B cell (primary cell): ENCODE measurements at regions of chr1 and their contacts with region 1.

Region 1: DNA sequence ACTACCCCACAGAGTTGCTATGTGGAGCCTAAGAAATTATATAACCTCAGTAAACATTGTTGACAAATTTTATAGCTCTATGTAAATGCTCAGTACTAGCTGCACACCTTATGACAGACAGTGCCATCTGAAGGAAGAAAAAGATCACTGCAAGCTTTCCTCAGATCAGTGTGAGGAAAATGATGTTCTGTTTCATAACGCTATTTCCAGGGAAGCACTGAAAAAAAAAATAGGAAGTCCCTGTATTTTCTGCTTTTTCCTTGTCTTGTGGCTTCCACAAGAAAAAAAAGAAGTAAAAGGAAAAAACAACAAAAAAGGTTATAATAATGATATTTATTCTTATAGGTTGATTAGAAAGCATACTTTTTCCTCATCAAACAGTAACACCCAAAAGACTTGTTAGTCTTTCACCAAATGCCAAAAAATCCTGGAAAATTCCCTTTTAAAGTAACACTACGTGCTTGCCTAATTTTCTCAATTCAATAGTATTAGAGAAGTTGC is 23.2 kb downstream of the LYST start:
- DNase-seq: peak; percentile 50
- ATAC-seq: peak; percentile 58
- H3K4me3 ChIP-seq: no peak overlapping the region
- H3K4me3 Mint-ChIP-seq: peak overlapping the region; percentile 42
- H3K27ac ChIP-seq: peak overlapping the region; percentile 71 to 84
- H3K27ac Mint-ChIP-seq: peak overlapping the region; percentile 73
- H3K4me1 ChIP-seq: peaks cover 65 to 67% of the 10 kb centered on the region in 2 donors
- H3K4me1 Mint-ChIP-seq: peaks cover 90% of the 10 kb centered on the region
- H3K27me3 ChIP-seq: no peaks in the 10 kb centered on the region
- H3K27me3 Mint-ChIP-seq: no peaks in the 10 kb centered on the region
- CTCF ChIP-seq: peak; percentile 74

Region 2: DNA sequence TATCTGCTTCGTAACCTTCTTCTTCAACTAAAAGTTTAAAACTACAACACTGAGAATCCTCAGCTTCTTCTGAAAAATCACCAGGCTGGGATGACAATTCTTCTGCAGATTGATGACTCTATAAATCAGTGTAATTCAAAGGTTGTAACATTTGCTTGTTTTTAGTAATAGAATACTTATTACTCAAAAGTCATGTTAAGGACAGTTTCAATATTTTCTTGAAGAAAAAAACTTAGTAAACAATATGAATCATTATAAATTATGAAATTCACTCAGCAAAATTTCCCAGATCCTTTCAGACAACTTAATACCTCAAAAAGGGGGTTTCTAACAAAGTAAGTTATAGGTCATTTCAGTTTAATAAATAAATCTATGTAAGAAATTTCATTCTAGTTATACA is 40.6 kb before region 1 on chr1:
- CTCF ChIA-PET with region 1: interaction called, 5 read pairs
- POLR2A ChIA-PET with region 1: no interaction called
- intact Hi-C with region 1: loop called (anchors 5 kb)
- DNase-seq: no peak
- ATAC-seq: no peak
- H3K4me3 ChIP-seq: no peak overlapping the region
- H3K4me3 Mint-ChIP-seq: no peak overlapping the region
- H3K27ac ChIP-seq: no peak overlapping the region
- H3K27ac Mint-ChIP-seq: no peak overlapping the region
- H3K4me1 ChIP-seq: no peaks in the 10 kb centered on the region
- H3K4me1 Mint-ChIP-seq: no peaks in the 10 kb centered on the region
- H3K27me3 ChIP-seq: no peaks in the 10 kb centered on the region
- H3K27me3 Mint-ChIP-seq: no peaks in the 10 kb centered on the region
- CTCF ChIP-seq: no peak

Region 3: DNA sequence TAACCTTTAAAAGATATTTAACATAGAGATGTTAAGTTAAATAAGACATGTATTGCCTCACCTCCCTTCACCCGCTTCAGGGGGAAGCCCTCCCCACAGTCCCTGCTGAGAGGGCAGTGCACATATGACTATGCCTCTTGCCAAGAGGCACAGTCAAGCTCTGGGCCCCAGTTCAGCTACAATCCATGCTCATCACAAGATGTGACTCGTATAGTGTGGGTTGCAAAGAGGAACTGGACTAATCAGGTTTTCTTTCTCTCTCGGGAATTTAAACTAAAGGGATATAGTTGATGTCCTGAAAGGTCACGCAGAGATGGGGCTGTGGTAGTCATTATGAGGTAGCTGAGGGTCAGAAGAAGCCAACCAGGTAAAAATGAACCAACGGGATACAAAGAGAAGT is 12.4 kb before region 1 on chr1:
- CTCF ChIA-PET with region 1: interaction called, 19 read pairs
- POLR2A ChIA-PET with region 1: no interaction called
- intact Hi-C with region 1: no loop called
- DNase-seq: no peak
- ATAC-seq: peak; percentile 73
- H3K4me3 ChIP-seq: no peak overlapping the region
- H3K4me3 Mint-ChIP-seq: no peak overlapping the region
- H3K27ac ChIP-seq: peak overlapping the region in 1 of 2 donors; percentile 52
- H3K27ac Mint-ChIP-seq: peak overlapping the region; percentile 44
- H3K4me1 ChIP-seq: peaks cover 0 to 4% of the 10 kb centered on the region in 2 donors
- H3K4me1 Mint-ChIP-seq: peaks cover 19% of the 10 kb centered on the region
- H3K27me3 ChIP-seq: no peaks in the 10 kb centered on the region
- H3K27me3 Mint-ChIP-seq: no peaks in the 10 kb centered on the region
- CTCF ChIP-seq: no peak

Region 4: GRCh38 chr1:235855811-235856429 is 12.4 kb after region 1 on chr1:
- CTCF ChIA-PET with region 1: interaction called, 19 read pairs
- POLR2A ChIA-PET with region 1: no interaction called
- intact Hi-C with region 1: no loop called
- DNase-seq: no peak
- ATAC-seq: peak; percentile 31
- H3K4me3 ChIP-seq: no peak overlapping the region
- H3K4me3 Mint-ChIP-seq: peak overlapping the region; percentile 6
- H3K27ac ChIP-seq: peak overlapping the region in 1 of 2 donors; percentile 26
- H3K27ac Mint-ChIP-seq: no peak overlapping the region
- H3K4me1 ChIP-seq: peaks cover 0 to 56% of the 10 kb centered on the region in 2 donors
- H3K4me1 Mint-ChIP-seq: peaks cover 46% of the 10 kb centered on the region
- H3K27me3 ChIP-seq: no peaks in the 10 kb centered on the region
- H3K27me3 Mint-ChIP-seq: no peaks in the 10 kb centered on the region
- CTCF ChIP-seq: no peak

Region 5: GRCh38 chr1:235938709-235939479 is 95.4 kb after region 1 on chr1:
- CTCF ChIA-PET with region 1: interaction called, 12 read pairs
- POLR2A ChIA-PET with region 1: no interaction called
- intact Hi-C with region 1: no loop called
- DNase-seq: peak; percentile 75
- ATAC-seq: peak; percentile 84
- H3K4me3 ChIP-seq: peak overlapping the region in 4 of 5 experiments; percentile 8 to 42 (median 17)
- H3K4me3 Mint-ChIP-seq: peak overlapping the region; percentile 72
- H3K27ac ChIP-seq: peak overlapping the region; percentile 79 to 89
- H3K27ac Mint-ChIP-seq: peak overlapping the region; percentile 87
- H3K4me1 ChIP-seq: peaks cover 85 to 89% of the 10 kb centered on the region in 2 donors
- H3K4me1 Mint-ChIP-seq: peaks cover 80% of the 10 kb centered on the region
- H3K27me3 ChIP-seq: no peaks in the 10 kb centered on the region
- H3K27me3 Mint-ChIP-seq: no peaks in the 10 kb centered on the region
- CTCF ChIP-seq: no peak

Region 6: DNA sequence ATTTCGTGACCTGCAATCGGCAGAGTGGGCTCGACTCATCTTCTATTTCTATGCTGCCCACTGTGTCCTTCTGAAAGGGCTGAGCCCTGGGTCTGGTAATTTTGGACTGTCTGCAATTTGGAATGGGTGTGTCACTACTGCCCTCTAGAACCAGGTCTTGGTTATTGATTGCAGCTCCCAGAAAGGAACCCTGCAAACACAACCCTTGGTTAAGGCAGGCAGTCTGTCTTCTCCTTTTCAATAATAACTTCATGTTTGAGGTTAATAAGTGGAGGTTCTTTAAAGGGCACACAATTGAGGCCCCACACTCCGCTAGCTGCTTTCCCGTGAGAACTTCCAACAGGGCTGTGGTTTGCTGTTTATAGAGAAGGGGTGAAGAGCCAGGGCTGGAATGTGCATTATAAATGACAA is 103.1 kb after region 1 on chr1:
- CTCF ChIA-PET with region 1: interaction called, 11 read pairs
- POLR2A ChIA-PET with region 1: no interaction called
- intact Hi-C with region 1: no loop called
- DNase-seq: no peak
- ATAC-seq: peak; percentile 61
- H3K4me3 ChIP-seq: peak overlapping the region in 1 of 5 experiments; percentile 34
- H3K4me3 Mint-ChIP-seq: peak overlapping the region; percentile 64
- H3K27ac ChIP-seq: peak overlapping the region; percentile 9 to 68
- H3K27ac Mint-ChIP-seq: peak overlapping the region; percentile 79
- H3K4me1 ChIP-seq: peaks cover 78 to 88% of the 10 kb centered on the region in 2 donors
- H3K4me1 Mint-ChIP-seq: peaks cover 81% of the 10 kb centered on the region
- H3K27me3 ChIP-seq: no peaks in the 10 kb centered on the region
- H3K27me3 Mint-ChIP-seq: no peaks in the 10 kb centered on the region
- CTCF ChIP-seq: no peak

Region 7: GRCh38 chr1:235954306-235955283 is 111.1 kb after region 1 on chr1:
- CTCF ChIA-PET with region 1: interaction called, 49 read pairs
- POLR2A ChIA-PET with region 1: no interaction called
- intact Hi-C with region 1: loop called (anchors 5 kb)
- DNase-seq: peak; percentile 95
- ATAC-seq: peak; percentile 88
- H3K4me3 ChIP-seq: peak overlapping the region in 3 of 5 experiments; percentile 18 to 37 (median 32)
- H3K4me3 Mint-ChIP-seq: peak overlapping the region; percentile 72
- H3K27ac ChIP-seq: peak overlapping the region; percentile 70 to 78
- H3K27ac Mint-ChIP-seq: peak overlapping the region; percentile 82
- H3K4me1 ChIP-seq: peaks cover 57 to 61% of the 10 kb centered on the region in 2 donors
- H3K4me1 Mint-ChIP-seq: peaks cover 71% of the 10 kb centered on the region
- H3K27me3 ChIP-seq: no peaks in the 10 kb centered on the region
- H3K27me3 Mint-ChIP-seq: no peaks in the 10 kb centered on the region
- CTCF ChIP-seq: no peak

Region 8: GRCh38 chr1:236009857-236010256 is 166.3 kb after region 1 on chr1:
- CTCF ChIA-PET with region 1: no interaction called
- POLR2A ChIA-PET with region 1: no interaction called
- intact Hi-C with region 1: no loop called
- DNase-seq: no peak
- ATAC-seq: no peak
- H3K4me3 ChIP-seq: no peak overlapping the region
- H3K4me3 Mint-ChIP-seq: no peak overlapping the region
- H3K27ac ChIP-seq: no peak overlapping the region
- H3K27ac Mint-ChIP-seq: no peak overlapping the region
- H3K4me1 ChIP-seq: no peaks in the 10 kb centered on the region
- H3K4me1 Mint-ChIP-seq: no peaks in the 10 kb centered on the region
- H3K27me3 ChIP-seq: no peaks in the 10 kb centered on the region
- H3K27me3 Mint-ChIP-seq: no peaks in the 10 kb centered on the region
- CTCF ChIP-seq: no peak